CD4-positive, alpha-beta T cell (primary cell): ENCODE measurements at regions of chr3 and their contacts with region 1.

Region 1: GRCh38 chr3:122589297-122589696 is 11.8 kb downstream of the PARP15 start:
- DNase-seq: no peak
- ATAC-seq: no peak
- H3K4me3 ChIP-seq: no peak overlapping the region
- H3K4me3 Mint-ChIP-seq: no peak overlapping the region
- H3K27ac ChIP-seq: no peak overlapping the region
- H3K27ac Mint-ChIP-seq: no peak overlapping the region
- H3K4me1 ChIP-seq: no peaks in the 10 kb centered on the region
- H3K4me1 Mint-ChIP-seq: peaks cover 38% of the 10 kb centered on the region
- H3K27me3 ChIP-seq: no peaks in the 10 kb centered on the region
- H3K27me3 Mint-ChIP-seq: no peaks in the 10 kb centered on the region
- CTCF ChIP-seq: no peak

Region 2: DNA sequence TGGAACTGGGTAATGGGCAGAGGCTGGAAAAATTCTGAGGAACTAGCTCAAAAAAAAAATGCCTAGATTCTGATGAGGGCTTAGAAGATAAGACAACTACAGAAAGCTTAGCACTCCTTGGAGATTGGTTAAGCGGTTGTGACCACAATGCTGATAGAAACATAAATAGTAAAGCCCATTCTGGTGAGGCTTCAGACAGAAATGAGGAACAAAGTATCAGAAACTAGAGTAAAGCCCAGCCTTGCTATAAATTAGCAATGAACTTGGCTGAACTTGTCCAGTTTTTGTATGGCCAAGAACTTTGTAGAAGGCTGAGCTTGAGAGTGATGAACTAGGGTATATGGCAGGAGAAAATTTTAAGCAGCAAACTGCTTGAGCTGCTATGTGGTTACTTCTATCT is 865.2 kb before region 1 on chr3:
- CTCF ChIA-PET with region 1: no interaction called
- POLR2A ChIA-PET with region 1: no interaction called
- intact Hi-C with region 1: loop called in 1 of 2 experiments (anchors 10 kb)
- DNase-seq: no peak
- ATAC-seq: no peak
- H3K4me3 ChIP-seq: no peak overlapping the region
- H3K4me3 Mint-ChIP-seq: no peak overlapping the region
- H3K27ac ChIP-seq: no peak overlapping the region
- H3K27ac Mint-ChIP-seq: no peak overlapping the region
- H3K4me1 ChIP-seq: no peaks in the 10 kb centered on the region
- H3K4me1 Mint-ChIP-seq: peaks cover 27% of the 10 kb centered on the region
- H3K27me3 ChIP-seq: no peaks in the 10 kb centered on the region
- H3K27me3 Mint-ChIP-seq: no peaks in the 10 kb centered on the region
- CTCF ChIP-seq: no peak